ENCODE measurements at regions of chr13 and their contacts with region 1.

Region 1: GRCh38 chr13:26037301-26037700 is 14.5 kb downstream of the SHISA2 start:
- DNase-seq: peak; percentile 87
- ATAC-seq: peak; percentile 99
- H3K4me3 Mint-ChIP-seq: no peak overlapping the region
- H3K27ac Mint-ChIP-seq: no peak overlapping the region
- H3K4me1 Mint-ChIP-seq: peaks cover 13% of the 10 kb centered on the region
- H3K27me3 Mint-ChIP-seq: no peaks in the 10 kb centered on the region
- CTCF ChIP-seq: peak; percentile 90

Region 2: GRCh38 chr13:25827831-25828465 is 209.4 kb before region 1 on chr13:
- CTCF ChIA-PET with region 1: interaction called, 19 read pairs
- POLR2A ChIA-PET with region 1: no interaction called
- DNase-seq: no peak
- ATAC-seq: no peak
- H3K4me3 Mint-ChIP-seq: no peak overlapping the region
- H3K27ac Mint-ChIP-seq: no peak overlapping the region
- H3K4me1 Mint-ChIP-seq: no peaks in the 10 kb centered on the region; the same call in 1 of the 2 replicates
- H3K27me3 Mint-ChIP-seq: no peaks in the 10 kb centered on the region
- CTCF ChIP-seq: no peak

Region 3: DNA sequence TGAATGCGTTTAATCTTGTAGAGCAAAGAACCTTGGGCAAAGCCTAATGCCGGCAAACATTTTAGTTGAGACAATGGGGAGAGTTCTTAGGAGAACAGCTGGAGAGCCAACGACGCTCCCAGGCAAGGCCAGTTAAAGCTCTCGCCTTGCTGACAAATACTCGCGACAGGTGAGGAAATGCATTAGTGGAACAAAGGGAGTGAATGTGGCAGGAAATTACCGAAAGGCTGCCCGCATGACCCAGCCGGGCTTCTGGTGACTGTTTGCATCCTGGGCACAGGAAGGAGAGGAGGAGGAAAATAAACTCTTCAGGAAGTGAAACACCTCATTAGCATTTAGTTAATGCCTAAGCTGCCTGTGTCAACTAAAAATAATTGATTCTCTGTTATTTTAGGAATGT is 60.1 kb before region 1 on chr13:
- CTCF ChIA-PET with region 1: interaction called, 12 read pairs
- POLR2A ChIA-PET with region 1: no interaction called
- DNase-seq: peak; percentile 64
- ATAC-seq: peak; percentile 82
- H3K4me3 Mint-ChIP-seq: peak overlapping the region; percentile 28
- H3K27ac Mint-ChIP-seq: peak overlapping the region; percentile 97
- H3K4me1 Mint-ChIP-seq: peaks cover 81% of the 10 kb centered on the region
- H3K27me3 Mint-ChIP-seq: peaks cover 16% of the 10 kb centered on the region
- CTCF ChIP-seq: no peak

Region 4: GRCh38 chr13:26025196-26025595 is 12.1 kb before region 1 on chr13:
- CTCF ChIA-PET with region 1: interaction called, 35 read pairs
- POLR2A ChIA-PET with region 1: no interaction called
- DNase-seq: peak; percentile 45
- ATAC-seq: peak; percentile 71
- H3K4me3 Mint-ChIP-seq: no peak overlapping the region
- H3K27ac Mint-ChIP-seq: no peak overlapping the region
- H3K4me1 Mint-ChIP-seq: peaks cover 41% of the 10 kb centered on the region
- H3K27me3 Mint-ChIP-seq: no peaks in the 10 kb centered on the region; the same call in 1 of the 2 replicates
- CTCF ChIP-seq: no peak

Region 5: DNA sequence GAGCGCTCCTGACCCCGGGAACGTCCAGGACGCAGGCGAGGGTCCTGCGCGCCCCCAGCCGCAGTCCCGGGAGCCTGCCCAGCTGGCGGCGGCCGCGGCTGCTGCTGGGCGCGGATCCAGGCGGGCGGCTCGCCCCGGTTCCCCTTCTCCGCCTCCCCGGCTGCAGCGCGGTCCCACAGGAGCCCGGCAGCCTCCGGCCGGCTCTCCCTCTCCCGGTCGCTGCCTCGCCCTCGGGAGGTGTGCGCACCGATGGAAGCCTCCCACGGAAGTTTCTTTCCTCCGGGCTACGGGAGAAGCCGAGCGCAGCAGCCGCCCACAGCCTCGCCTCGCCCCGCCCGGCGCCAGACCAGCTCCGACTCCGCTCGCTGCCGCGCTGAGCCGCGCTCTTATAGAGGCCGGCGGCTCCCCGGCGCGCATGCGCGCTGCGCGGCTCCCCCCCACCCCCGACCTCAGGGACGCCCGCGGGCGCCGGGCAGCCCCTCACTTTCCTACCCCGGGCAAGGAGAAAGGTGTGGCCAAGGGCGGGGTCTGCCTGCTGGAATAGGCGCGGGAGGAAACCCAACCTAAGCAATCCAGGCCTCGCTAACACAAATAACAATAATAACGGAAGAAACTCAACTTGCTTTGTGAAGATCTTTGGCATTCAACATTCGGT is 14.5 kb after region 1 on chr13 and contains the start of gene SHISA2:
- CTCF ChIA-PET with region 1: interaction called, 11 read pairs
- POLR2A ChIA-PET with region 1: interaction called, 7 read pairs
- DNase-seq: peak; percentile 77
- ATAC-seq: peak; percentile 76
- H3K4me3 Mint-ChIP-seq: peak within 1 kb of the TSS; percentile 69
- H3K27ac Mint-ChIP-seq: no peak within 1 kb of the TSS
- H3K4me1 Mint-ChIP-seq: peaks cover 18% of the 10 kb centered on the region
- H3K27me3 Mint-ChIP-seq: peaks cover 43% of the 10 kb centered on the region
- CTCF ChIP-seq: no peak
- total RNA-seq, gene SHISA2: 12.9 to 20.5 TPM (median 13.3 TPM) in 3 replicates

Region 6: GRCh38 chr13:26074706-26075105 is 37.4 kb after region 1 on chr13:
- CTCF ChIA-PET with region 1: no interaction called
- POLR2A ChIA-PET with region 1: no interaction called
- DNase-seq: no peak
- ATAC-seq: peak; percentile 51; the same call in 1 of the 2 replicates
- H3K4me3 Mint-ChIP-seq: no peak overlapping the region
- H3K27ac Mint-ChIP-seq: no peak overlapping the region
- H3K4me1 Mint-ChIP-seq: peaks cover 15% of the 10 kb centered on the region
- H3K27me3 Mint-ChIP-seq: no peaks in the 10 kb centered on the region
- CTCF ChIP-seq: no peak

Measured in WTC11 (cell line).